ENCODE measurements at regions of chr10 and their contacts with region 1.

Region 1: DNA sequence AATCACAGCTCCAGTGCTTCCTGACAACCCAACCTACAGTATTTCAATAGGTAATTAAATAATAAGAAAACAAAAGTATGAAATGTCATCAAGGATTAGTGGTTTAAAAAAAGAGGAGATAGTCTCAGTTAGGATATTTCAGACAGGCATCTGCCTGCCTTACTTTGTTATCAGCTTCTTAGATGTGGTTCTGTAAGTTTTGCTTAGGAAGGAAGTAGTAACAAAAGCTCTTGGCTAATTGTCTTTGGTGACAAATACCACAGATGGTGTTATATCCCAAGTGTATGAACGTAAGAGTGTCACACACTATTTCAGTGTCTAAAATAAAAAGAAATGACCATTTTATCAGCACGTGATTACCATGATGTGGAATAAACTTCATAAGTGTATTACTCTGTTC is 9.8 kb upstream of the ACTA2 start:
- DNase-seq: no peak
- H3K4me3 Mint-ChIP-seq: no peak overlapping the region
- H3K27ac Mint-ChIP-seq: peak overlapping the region; percentile 75
- H3K4me1 Mint-ChIP-seq: peaks cover 31% of the 10 kb centered on the region
- H3K27me3 Mint-ChIP-seq: no peaks in the 10 kb centered on the region

Region 2: GRCh38 chr10:88990384-88991160 is 28.2 kb after region 1 on chr10 and contains the start of gene FAS:
- CTCF ChIA-PET with region 1: interaction called, 11 read pairs
- DNase-seq: peak; percentile 88
- H3K4me3 Mint-ChIP-seq: peak within 1 kb of the TSS; percentile 99
- H3K27ac Mint-ChIP-seq: peak within 1 kb of the TSS; percentile 98
- H3K4me1 Mint-ChIP-seq: peaks cover 76% of the 10 kb centered on the region
- H3K27me3 Mint-ChIP-seq: peaks cover 5% of the 10 kb centered on the region